Right ventricle myocardium superior (tissue), 1 donor: ENCODE measurements at regions of chr12 and their contacts with region 1.

Region 1: GRCh38 chr12:2057041-2057794 is 4.4 kb downstream of the CACNA1C start:
- DNase-seq: peak; percentile 71
- ATAC-seq: peak; percentile 9

Region 2: GRCh38 chr12:2179953-2180736 is 122.9 kb after region 1 on chr12:
- intact Hi-C with region 1: loop called (anchors 10 kb)
- DNase-seq: peak; percentile 80
- ATAC-seq: peak; percentile 87

Region 3: GRCh38 chr12:2273288-2273687 is 216.1 kb after region 1 on chr12:
- intact Hi-C with region 1: loop called (anchors 10 kb)
- DNase-seq: peak; percentile 76
- ATAC-seq: peak; percentile 74

Region 4: GRCh38 chr12:2583091-2583497 is 525.9 kb after region 1 on chr12:
- intact Hi-C with region 1: loop called (anchors 10 kb)
- DNase-seq: peak; percentile 84
- ATAC-seq: peak; percentile 91